ENCODE measurements at regions of chr1 and their contacts with region 1.

Region 1: GRCh38 chr1:225467193-225468020 is 39.6 kb upstream of the LBR start:
- DNase-seq: peak; percentile 84
- ATAC-seq: peak; percentile 87
- H3K4me3 Mint-ChIP-seq: peak overlapping the region; percentile 92
- H3K27ac Mint-ChIP-seq: peak overlapping the region; percentile 97
- H3K4me1 Mint-ChIP-seq: peaks cover 24% of the 10 kb centered on the region
- H3K27me3 Mint-ChIP-seq: no peaks in the 10 kb centered on the region

Region 2: DNA sequence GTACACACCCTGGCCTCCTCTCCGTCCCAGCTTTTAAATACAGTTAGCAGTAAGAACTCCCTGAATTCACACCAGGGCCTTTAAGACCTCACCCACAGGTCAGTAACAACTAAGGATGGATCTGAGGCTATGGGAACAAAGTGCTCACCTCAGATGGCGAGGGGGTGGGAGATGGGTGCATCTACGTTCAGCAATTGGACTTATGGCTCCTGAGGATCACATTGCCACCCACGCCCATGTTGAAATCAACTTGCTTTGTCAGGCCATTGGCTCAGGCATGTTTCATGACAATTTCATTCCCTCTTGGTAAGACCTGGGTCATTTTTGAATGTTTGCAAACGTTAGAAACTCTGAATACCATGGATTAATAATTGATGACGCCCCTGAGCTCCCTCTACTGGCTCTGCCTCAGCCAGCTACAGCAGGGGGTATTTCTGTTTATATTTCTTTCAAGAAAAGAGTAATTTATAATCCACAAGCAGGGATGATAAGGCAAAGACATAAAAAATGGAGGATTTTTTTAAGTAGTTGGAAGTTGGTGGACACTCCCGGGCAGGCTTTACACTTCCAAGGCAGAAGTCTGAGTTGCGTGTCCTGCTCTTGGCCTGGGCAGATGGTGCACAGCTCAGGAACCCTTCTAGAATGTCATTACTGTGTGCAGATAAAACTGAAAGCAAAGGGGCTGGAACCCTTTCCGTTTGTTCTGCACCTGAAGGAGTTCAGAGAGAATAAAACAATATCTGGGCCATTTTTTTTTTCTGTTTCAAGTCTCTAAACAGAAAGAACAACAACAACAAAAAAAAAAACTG is 25.9 kb before region 1 on chr1:
- POLR2A ChIA-PET with region 1: interaction called, 226 read pairs
- DNase-seq: no peak
- ATAC-seq: no peak
- H3K4me3 Mint-ChIP-seq: peak overlapping the region; percentile 74
- H3K27ac Mint-ChIP-seq: peak overlapping the region; percentile 84
- H3K4me1 Mint-ChIP-seq: peaks cover 51% of the 10 kb centered on the region
- H3K27me3 Mint-ChIP-seq: no peaks in the 10 kb centered on the region

Region 3: GRCh38 chr1:225777583-225778336 is 310.4 kb after region 1 on chr1 and contains the start of gene SRP9:
- POLR2A ChIA-PET with region 1: interaction called, 26 read pairs
- DNase-seq: peak; percentile 98
- ATAC-seq: peak; percentile 97
- H3K4me3 Mint-ChIP-seq: no peak within 1 kb of the TSS
- H3K27ac Mint-ChIP-seq: no peak within 1 kb of the TSS
- H3K4me1 Mint-ChIP-seq: peaks cover 20% of the 10 kb centered on the region
- H3K27me3 Mint-ChIP-seq: no peaks in the 10 kb centered on the region
- total RNA-seq, gene SRP9: 209 to 226 TPM

Region 4: GRCh38 chr1:225896937-225897549 is 429.6 kb after region 1 on chr1:
- POLR2A ChIA-PET with region 1: interaction called, 10 read pairs
- DNase-seq: peak; percentile 62
- ATAC-seq: peak; percentile 94
- H3K4me3 Mint-ChIP-seq: peak overlapping the region; percentile 55
- H3K27ac Mint-ChIP-seq: peak overlapping the region; percentile 54
- H3K4me1 Mint-ChIP-seq: peaks cover 23% of the 10 kb centered on the region
- H3K27me3 Mint-ChIP-seq: peaks cover 21% of the 10 kb centered on the region

Measured in activated naive CD8-positive, alpha-beta T cell treated with anti-CD3 and anti-CD28 coated beads, Interleukin-2, amount 10 ng/mL, durations not matched to agents 7 days and 5 days (primary cell).